Activated CD8-positive, alpha-beta T cell treated with anti-CD3 and anti-CD28 coated beads, Interleukin-2, amount 10 ng/mL, durations not matched to agents 7 days and 5 days (primary cell): ENCODE measurements at regions of chr1 and their contacts with region 1.

Region 1: GRCh38 chr1:35564037-35564883 is 6.7 kb downstream of the NCDN start:
- DNase-seq: peak; percentile 90
- ATAC-seq: peak; percentile 76
- H3K4me3 Mint-ChIP-seq: no peak overlapping the region
- H3K27ac Mint-ChIP-seq: peak overlapping the region; percentile 30
- H3K4me1 Mint-ChIP-seq: peaks cover 26% of the 10 kb centered on the region
- H3K27me3 Mint-ChIP-seq: no peaks in the 10 kb centered on the region

Region 2: GRCh38 chr1:35488336-35488735 is 75.9 kb before region 1 on chr1:
- CTCF ChIA-PET with region 1: interaction called, 10 read pairs
- POLR2A ChIA-PET with region 1: no interaction called
- DNase-seq: no peak
- ATAC-seq: no peak
- H3K4me3 Mint-ChIP-seq: no peak overlapping the region
- H3K27ac Mint-ChIP-seq: peak overlapping the region; percentile 7
- H3K4me1 Mint-ChIP-seq: peaks cover 18% of the 10 kb centered on the region
- H3K27me3 Mint-ChIP-seq: no peaks in the 10 kb centered on the region

Region 3: DNA sequence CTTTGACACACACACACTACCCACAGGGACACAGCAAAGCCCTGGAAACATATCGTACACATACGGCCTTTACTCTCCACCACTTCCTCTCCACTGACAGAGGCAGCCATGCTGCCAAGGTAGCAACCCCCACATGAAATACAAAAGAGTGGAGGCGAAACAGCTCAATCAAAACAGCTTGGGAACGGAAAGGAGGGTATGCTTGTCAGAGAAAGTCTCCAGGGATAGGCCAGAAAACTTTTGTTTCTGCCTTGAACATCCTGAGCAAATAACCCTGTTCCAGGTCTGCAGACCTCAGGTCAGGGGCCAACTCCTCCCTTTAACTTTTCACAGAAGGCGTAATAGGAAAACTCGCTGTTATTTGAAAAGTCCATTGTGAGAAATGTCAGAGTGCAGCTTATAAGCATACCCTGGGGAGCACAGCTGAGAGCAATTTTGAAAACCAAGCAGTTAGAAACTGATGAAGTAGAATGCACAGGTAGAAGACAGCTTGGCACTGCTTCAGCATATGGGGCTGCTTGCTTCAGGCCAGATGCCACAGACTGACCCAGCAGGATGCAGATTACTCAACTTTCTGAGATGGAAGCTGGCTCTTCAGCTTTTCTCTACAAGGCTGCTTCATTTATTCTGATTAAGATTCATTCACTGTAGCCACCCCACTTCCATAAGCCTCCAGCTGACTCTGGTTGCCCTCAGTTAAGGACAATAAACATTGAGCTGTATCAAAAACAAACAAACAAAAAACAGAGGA is 25.0 kb before region 1 on chr1:
- CTCF ChIA-PET with region 1: interaction called, 10 read pairs
- POLR2A ChIA-PET with region 1: no interaction called
- DNase-seq: peak; percentile 71
- ATAC-seq: peak; percentile 95
- H3K4me3 Mint-ChIP-seq: peak overlapping the region; percentile 64
- H3K27ac Mint-ChIP-seq: peak overlapping the region; percentile 94
- H3K4me1 Mint-ChIP-seq: peaks cover 49% of the 10 kb centered on the region
- H3K27me3 Mint-ChIP-seq: no peaks in the 10 kb centered on the region

Region 4: DNA sequence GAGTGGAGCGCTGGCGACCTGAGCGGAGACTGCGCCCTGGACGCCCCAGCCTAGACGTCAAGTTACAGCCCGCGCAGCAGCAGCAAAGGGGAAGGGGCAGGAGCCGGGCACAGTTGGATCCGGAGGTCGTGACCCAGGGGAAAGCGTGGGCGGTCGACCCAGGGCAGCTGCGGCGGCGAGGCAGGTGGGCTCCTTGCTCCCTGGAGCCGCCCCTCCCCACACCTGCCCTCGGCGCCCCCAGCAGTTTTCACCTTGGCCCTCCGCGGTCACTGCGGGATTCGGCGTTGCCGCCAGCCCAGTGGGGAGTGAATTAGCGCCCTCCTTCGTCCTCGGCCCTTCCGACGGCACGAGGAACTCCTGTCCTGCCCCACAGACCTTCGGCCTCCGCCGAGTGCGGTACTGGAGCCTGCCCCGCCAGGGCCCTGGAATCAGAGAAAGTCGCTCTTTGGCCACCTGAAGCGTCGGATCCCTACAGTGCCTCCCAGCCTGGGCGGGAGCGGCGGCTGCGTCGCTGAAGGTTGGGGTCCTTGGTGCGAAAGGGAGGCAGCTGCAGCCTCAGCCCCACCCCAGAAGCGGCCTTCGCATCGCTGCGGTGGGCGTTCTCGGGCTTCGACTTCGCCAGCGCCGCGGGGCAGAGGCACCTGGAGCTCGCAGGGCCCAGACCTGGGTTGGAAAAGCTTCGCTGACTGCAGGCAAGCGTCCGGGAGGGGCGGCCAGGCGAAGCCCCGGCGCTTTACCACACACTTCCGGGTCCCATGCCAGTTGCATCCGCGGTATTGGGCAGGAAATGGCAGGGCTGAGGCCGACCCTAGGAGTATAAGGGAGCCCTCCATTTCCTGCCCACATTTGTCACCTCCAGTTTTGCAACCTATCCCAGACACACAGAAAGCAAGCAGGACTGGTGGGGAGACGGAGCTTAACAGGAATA is 13.1 kb after region 1 on chr1:
- CTCF ChIA-PET with region 1: interaction called, 26 read pairs
- POLR2A ChIA-PET with region 1: interaction called, 5 read pairs
- DNase-seq: peak; percentile 85
- ATAC-seq: peak; percentile 87
- H3K4me3 Mint-ChIP-seq: peak overlapping the region; percentile 81
- H3K27ac Mint-ChIP-seq: peak overlapping the region; percentile 94
- H3K4me1 Mint-ChIP-seq: peaks cover 34% of the 10 kb centered on the region
- H3K27me3 Mint-ChIP-seq: peaks cover 8% of the 10 kb centered on the region

Region 5: GRCh38 chr1:35726450-35727433 is 162.5 kb after region 1 on chr1:
- CTCF ChIA-PET with region 1: interaction called, 57 read pairs
- POLR2A ChIA-PET with region 1: no interaction called
- DNase-seq: peak; percentile 62
- ATAC-seq: peak; percentile 87
- H3K4me3 Mint-ChIP-seq: no peak overlapping the region
- H3K27ac Mint-ChIP-seq: no peak overlapping the region
- H3K4me1 Mint-ChIP-seq: peaks cover 3% of the 10 kb centered on the region
- H3K27me3 Mint-ChIP-seq: no peaks in the 10 kb centered on the region

Region 6: GRCh38 chr1:35769188-35769758 is 205.0 kb after region 1 on chr1:
- CTCF ChIA-PET with region 1: interaction called, 15 read pairs
- POLR2A ChIA-PET with region 1: no interaction called
- DNase-seq: peak; percentile 93
- ATAC-seq: peak; percentile 87
- H3K4me3 Mint-ChIP-seq: peak overlapping the region; percentile 97
- H3K27ac Mint-ChIP-seq: peak overlapping the region; percentile 84
- H3K4me1 Mint-ChIP-seq: peaks cover 27% of the 10 kb centered on the region
- H3K27me3 Mint-ChIP-seq: no peaks in the 10 kb centered on the region